Activated CD4-positive, alpha-beta T cell treated with anti-CD3 and anti-CD28 coated beads for 36 hours (primary cell): ENCODE measurements at regions of chr13 and their contacts with region 1.

Region 1: DNA sequence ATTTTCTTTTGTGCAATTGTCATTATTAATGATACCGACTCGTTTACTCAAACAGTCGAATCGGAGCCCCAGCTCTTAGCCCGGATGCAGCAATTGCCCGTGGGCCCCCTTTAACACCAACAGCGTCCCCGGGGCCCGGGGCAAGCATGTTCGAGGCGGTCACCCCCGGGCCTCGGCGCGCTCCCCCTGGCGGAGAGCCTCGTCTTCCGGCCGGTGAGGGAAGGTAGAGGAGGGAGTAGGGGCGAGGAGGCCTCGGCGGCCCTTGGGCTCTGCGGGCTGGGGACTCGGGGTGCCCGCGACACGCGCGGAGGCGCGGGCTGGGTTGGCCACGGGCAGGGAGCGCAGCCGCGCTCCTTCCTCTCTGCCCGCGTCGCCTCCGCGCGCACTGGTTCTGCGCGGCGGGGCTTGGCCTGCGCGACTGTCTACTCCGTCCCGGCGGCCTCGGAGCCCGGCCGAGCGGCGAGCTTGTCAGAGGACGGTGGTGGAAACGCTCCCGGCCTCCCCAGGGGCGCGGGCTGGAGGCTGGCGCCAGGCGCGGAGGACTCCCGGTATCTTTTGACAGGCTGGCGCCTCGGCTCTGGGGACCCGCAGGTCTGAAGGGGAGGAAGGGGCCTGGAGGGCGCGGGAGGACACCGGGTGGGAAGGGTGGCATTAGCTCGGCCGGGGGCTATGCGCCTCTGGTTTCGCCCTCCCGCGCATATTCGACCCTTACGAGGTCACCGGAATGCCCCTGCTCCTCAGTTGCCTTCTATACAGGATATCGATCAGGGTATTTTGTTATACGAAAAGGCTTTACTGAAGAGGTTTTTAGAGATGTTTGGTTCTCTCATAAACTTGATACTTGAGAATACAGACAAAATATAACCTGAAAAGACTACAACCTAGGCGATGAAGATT is 1.5 kb downstream of the BIVM start:
- DNase-seq: peak; percentile 91
- ATAC-seq: peak; percentile 81
- H3K4me3 Mint-ChIP-seq: peak overlapping the region; percentile 89
- H3K27ac Mint-ChIP-seq: peak overlapping the region; percentile 73
- H3K4me1 Mint-ChIP-seq: peaks cover 26% of the 10 kb centered on the region
- H3K27me3 Mint-ChIP-seq: peaks cover 6% of the 10 kb centered on the region

Region 2: DNA sequence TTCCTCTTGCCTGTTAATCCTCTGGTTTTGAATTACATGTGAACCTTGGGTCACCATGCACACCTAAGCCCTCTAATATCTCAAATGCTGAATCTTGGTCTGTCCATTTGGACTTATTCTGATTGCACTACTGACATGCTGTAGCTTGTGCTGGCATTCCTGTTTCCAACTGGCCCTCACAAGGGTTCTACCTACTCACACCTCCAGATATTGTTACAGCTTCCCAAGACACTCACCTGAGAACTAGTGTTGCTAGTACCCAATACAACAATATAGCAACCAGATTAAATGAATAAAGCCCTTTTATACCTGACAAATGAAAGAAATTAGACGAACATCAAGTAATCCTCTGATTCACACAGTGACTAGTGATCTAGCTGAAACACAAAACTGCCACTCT is 43.4 kb before region 1 on chr13:
- CTCF ChIA-PET with region 1: no interaction called
- POLR2A ChIA-PET with region 1: no interaction called
- intact Hi-C with region 1: no loop called
- DNase-seq: no peak
- ATAC-seq: no peak
- H3K4me3 Mint-ChIP-seq: no peak overlapping the region
- H3K27ac Mint-ChIP-seq: no peak overlapping the region
- H3K4me1 Mint-ChIP-seq: no peaks in the 10 kb centered on the region
- H3K27me3 Mint-ChIP-seq: no peaks in the 10 kb centered on the region

Region 3: GRCh38 chr13:102773441-102774215 is 26.8 kb before region 1 on chr13 and contains the start of gene TEX30:
- CTCF ChIA-PET with region 1: interaction called, 3 read pairs
- POLR2A ChIA-PET with region 1: no interaction called
- intact Hi-C with region 1: loop called (anchors 1 kb)
- DNase-seq: peak; percentile 91
- ATAC-seq: peak; percentile 97
- H3K4me3 Mint-ChIP-seq: peak within 1 kb of the TSS; percentile 73
- H3K27ac Mint-ChIP-seq: peak within 1 kb of the TSS; percentile 93
- H3K4me1 Mint-ChIP-seq: peaks cover 48% of the 10 kb centered on the region
- H3K27me3 Mint-ChIP-seq: no peaks in the 10 kb centered on the region
- total RNA-seq, gene TEX30: 21.5 to 25.8 TPM

Region 4: DNA sequence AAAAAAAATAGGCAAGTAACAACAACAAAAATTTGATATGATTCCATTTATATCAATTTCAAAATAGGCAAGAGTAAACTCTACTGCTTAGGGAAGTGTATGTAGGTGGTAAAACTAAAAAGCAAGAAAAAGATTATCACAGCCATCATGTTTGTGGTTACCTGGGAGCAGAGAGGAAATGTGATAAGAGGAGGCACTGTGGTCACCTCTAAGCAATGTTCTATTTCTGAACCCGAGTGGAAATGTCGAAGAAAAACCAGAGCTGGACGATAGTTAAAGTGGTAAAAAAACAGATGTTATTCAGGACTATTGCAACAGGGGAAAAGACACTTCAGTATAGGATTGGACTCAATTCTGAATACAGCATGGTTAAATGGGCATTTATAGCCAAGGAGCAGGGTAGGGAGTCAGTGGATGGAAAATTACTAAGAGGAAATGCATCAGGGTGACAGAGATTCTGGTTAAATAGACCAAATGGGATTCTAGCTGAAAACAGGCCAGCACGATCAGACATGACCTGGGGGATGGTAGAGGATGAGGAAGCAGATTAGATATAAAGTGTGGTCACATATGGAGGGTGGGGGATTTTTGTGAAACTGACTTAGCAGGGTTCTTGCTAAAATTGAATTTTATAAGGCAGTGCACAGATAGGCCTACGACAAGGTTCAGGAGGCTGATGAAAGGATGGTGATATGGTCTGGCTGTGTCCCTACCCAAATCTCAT is 20.8 kb before region 1 on chr13:
- CTCF ChIA-PET with region 1: interaction called, 3 read pairs
- POLR2A ChIA-PET with region 1: no interaction called
- intact Hi-C with region 1: loop called in 1 of 2 experiments (anchors 1 kb)
- DNase-seq: peak; percentile 40
- ATAC-seq: peak; percentile 87
- H3K4me3 Mint-ChIP-seq: peak overlapping the region; percentile 30
- H3K27ac Mint-ChIP-seq: peak overlapping the region; percentile 90
- H3K4me1 Mint-ChIP-seq: peaks cover 30% of the 10 kb centered on the region
- H3K27me3 Mint-ChIP-seq: no peaks in the 10 kb centered on the region

Region 5: DNA sequence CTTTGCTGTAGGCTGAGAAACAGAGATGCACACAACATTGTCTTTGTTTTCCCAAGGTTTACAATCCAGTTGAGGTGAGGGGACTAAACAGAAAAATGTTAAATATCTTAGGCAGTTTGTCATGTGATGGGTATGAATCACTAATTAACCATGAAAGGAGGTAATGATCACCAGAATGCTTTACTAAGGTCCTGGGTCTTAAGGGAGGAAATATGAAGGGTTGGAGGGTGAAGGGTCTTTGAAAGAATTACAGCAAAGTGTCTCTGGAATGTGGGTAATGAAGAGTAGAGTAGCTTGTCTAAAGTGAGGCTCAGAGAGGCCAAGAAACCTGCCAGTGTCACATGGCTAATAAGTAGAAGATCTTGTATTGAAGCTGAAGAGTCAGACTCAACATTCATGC is 17.5 kb after region 1 on chr13:
- CTCF ChIA-PET with region 1: interaction called, 10 read pairs
- POLR2A ChIA-PET with region 1: no interaction called
- intact Hi-C with region 1: no loop called
- DNase-seq: no peak
- ATAC-seq: no peak
- H3K4me3 Mint-ChIP-seq: no peak overlapping the region
- H3K27ac Mint-ChIP-seq: no peak overlapping the region
- H3K4me1 Mint-ChIP-seq: peaks cover 11% of the 10 kb centered on the region
- H3K27me3 Mint-ChIP-seq: no peaks in the 10 kb centered on the region